ENCODE measurements at regions of chr15 and their contacts with region 1.

Region 1: DNA sequence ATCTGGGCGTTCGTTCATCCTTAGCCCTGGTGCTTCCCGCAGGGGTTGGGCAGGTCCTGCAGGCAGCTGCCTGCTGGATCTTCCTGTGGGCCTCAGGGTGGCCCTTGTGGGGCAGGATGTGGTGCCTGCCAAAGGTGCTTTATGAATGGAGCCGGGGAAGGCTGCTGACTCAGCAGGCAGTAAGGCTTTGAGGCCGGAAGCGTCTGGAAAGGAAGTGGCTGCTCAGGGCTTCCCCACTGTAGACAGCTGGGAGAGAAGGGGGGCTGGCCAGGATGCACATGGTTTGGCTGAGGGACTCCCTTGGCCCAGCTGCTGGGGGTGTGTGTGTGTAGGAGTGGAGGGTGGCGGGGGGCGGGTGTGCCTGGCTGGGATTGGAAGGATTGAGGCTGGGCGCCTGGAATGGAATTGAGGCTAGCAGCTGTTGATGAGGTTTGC is 12.9 kb downstream of the CD276 start:
- DNase-seq: peak; percentile 64 to 77
- ATAC-seq: peak; percentile 62 to 70
- H3K4me3 ChIP-seq: no peak overlapping the region
- H3K27ac ChIP-seq: peak overlapping the region; percentile 30 to 68 (median 50)
- H3K4me1 ChIP-seq: peaks cover 36 to 39% of the 10 kb centered on the region in 2 donors
- H3K27me3 ChIP-seq: no peaks in the 10 kb centered on the region
- CTCF ChIP-seq: no peak
- POLR2A ChIP-seq: no peak

Region 2: DNA sequence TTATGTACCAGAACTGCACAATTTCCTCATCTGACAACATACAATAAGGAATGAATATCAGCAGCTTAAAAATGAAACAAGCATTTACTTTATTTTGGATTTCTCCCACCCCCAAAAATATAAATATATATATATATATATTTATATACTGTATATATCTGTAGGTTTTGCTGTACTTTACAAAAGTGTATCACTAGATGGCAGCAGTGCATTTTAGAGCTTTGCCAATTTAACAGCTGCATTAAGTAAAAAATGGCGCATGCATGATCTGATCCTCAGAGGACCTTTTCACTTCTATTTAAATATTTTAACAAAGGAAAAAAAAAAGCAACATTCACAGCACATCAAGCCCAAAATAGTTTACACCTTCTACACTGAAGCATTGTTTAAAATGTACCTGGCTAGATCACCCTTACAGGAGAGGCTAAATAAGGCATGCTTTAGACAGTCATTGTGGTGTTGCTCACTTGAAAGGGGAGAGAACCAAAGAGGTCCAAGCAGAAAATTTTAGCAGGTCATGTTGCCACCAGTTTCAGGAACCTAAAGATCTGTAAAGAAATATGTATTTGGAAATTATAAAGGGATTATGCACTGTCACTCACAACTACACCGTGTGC is 136.4 kb before region 1 on chr15:
- in situ Hi-C with region 1: no loop called
- intact Hi-C with region 1: loop called (anchors 5 kb)
- DNase-seq: no peak
- ATAC-seq: peak in 1 of 2 donors; percentile 54
- H3K4me3 ChIP-seq: no peak overlapping the region
- H3K27ac ChIP-seq: no peak overlapping the region
- H3K4me1 ChIP-seq: peaks cover 0 to 11% of the 10 kb centered on the region in 2 donors
- H3K27me3 ChIP-seq: no peaks in the 10 kb centered on the region
- CTCF ChIP-seq: peak in 3 of 5 experiments; percentile 23 to 68 (median 58)
- POLR2A ChIP-seq: no peak

Region 3: GRCh38 chr15:73677146-73677607 is 19.9 kb before region 1 on chr15:
- in situ Hi-C with region 1: no loop called
- intact Hi-C with region 1: loop called (anchors 1 kb)
- DNase-seq: peak; percentile 48 to 68
- ATAC-seq: peak; percentile 88 to 89
- H3K4me3 ChIP-seq: no peak overlapping the region
- H3K27ac ChIP-seq: no peak overlapping the region
- H3K4me1 ChIP-seq: no peaks in the 10 kb centered on the region
- H3K27me3 ChIP-seq: no peaks in the 10 kb centered on the region
- CTCF ChIP-seq: peak; percentile 86 to 92 (median 88)
- POLR2A ChIP-seq: no peak

Region 4: DNA sequence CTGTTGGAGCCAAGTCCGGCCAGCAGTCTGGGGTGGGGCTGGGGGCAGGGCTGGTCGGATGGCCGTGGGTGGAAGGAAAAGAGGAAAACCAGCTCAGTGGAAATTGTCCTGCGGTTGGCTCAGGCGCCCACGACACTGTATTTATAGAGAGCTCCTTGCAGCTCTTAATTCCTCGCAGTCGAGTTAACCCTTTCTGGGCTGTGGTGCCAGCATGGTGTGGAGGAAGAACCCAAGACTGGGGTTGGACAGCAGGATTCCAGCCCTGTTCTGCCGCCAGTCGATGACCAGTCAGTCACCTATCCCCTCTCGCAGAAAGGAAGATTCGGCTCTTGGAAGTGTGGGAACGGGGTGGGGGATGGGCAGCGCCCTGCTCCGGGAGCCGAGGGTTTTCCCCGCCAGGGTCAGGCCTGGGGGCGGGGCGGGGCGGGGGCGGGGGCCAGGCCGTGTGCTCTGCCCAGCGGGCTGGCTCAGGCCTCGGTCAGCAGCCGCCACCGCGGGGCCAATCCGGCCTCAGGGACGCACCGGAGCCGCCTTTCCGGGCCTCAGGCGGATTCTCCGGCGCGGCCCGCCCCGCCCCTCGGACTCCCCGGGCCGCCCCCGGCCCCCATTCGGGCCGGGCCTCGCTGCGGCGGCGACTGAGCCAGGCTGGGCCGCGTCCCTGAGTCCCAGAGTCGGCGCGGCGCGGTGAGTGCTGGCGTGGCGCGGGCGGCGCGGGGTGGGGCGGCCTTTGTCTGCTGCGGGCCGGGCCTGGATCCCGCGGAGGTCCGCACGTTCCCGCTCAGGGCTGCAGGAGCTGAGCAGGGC is 13.1 kb before region 1 on chr15 and contains the start of gene CD276:
- in situ Hi-C with region 1: no loop called
- intact Hi-C with region 1: loop called (anchors 1 kb)
- DNase-seq: peak; percentile 73 to 79
- ATAC-seq: peak; percentile 71 to 81
- H3K4me3 ChIP-seq: peak within 1 kb of the TSS; percentile 71 to 93 (median 76)
- H3K27ac ChIP-seq: peak within 1 kb of the TSS; percentile 79 to 92 (median 84)
- H3K4me1 ChIP-seq: peaks cover 22 to 35% of the 10 kb centered on the region in 2 donors
- H3K27me3 ChIP-seq: no peaks in the 10 kb centered on the region
- CTCF ChIP-seq: peak in 1 of 5 experiments; percentile 34
- POLR2A ChIP-seq: peak; percentile 56
- total RNA-seq, gene CD276: 9.6 to 21.4 (median 16.6) TPM

Region 5: DNA sequence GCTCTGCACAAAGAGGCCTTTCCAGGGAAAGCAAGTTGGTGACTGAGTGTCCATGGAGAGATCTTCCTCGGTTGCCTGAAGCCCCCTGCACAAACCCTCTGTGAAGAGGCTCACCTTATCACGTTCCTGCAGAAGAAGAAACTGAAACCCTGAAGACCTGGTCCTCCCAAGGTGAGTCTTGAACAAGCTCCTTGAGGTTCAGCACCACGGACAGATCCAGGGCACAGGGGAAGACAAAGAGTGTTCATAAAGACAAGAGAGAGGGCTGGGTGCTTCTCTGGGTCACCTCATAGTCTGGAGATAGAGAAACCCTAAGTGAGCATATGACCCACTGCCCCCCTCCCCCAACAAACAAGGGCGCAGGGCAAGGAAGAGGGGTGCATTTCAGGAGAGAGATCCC is 154.6 kb after region 1 on chr15:
- in situ Hi-C with region 1: no loop called
- intact Hi-C with region 1: no loop called
- DNase-seq: no peak
- ATAC-seq: no peak
- H3K4me3 ChIP-seq: no peak overlapping the region
- H3K27ac ChIP-seq: no peak overlapping the region
- H3K4me1 ChIP-seq: no peaks in the 10 kb centered on the region
- H3K27me3 ChIP-seq: peaks cover 0 to 5% (median 0%) of the 10 kb centered on the region in 3 donors
- CTCF ChIP-seq: no peak
- POLR2A ChIP-seq: no peak